AG04450 (cell line): ENCODE measurements at regions of chr3 and their contacts with region 1.

Region 1: DNA sequence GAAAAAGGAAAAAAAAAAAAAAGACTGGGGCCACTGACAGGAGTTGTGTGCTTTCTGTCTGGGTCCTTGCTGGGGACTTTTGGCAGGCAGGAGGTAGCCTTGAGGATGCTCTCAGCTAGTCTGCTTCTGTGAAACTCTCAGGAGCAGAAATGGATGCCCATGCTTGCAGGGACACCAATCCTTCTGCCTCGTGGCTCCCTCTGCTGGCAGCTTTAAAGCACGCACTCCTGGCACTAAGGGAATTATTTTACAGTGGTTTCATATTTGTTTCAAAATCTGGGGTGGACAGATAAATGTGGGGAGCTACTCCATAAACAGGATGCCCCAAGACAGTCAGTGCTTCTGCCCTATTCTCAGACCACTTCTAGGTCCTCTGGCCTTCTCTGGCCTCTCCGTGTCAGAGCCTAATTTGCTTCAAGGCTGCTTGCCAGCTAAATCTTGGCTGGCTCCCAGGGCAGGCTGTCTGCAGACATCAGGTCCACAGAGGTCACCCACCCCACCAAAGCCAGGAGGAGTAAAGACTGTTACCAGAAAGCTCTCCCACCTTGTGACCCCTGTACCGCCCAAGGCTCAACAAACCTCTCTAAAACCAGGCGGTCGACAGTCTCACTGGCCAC is 17.1 kb downstream of the TRAIP start:
- DNase-seq: peak; percentile 50
- H3K4me3 ChIP-seq: no peak overlapping the region
- H3K27ac ChIP-seq: no peak overlapping the region
- H3K27me3 ChIP-seq: no peaks in the 10 kb centered on the region
- CTCF ChIP-seq: peak; percentile 90

Region 2: GRCh38 chr3:49539659-49540560 is 299.4 kb before region 1 on chr3:
- CTCF ChIA-PET with region 1: interaction called, 12 read pairs
- POLR2A ChIA-PET with region 1: no interaction called
- DNase-seq: peak; percentile 88
- H3K4me3 ChIP-seq: peak overlapping the region; percentile 62
- H3K27ac ChIP-seq: peak overlapping the region; percentile 65
- H3K27me3 ChIP-seq: peaks cover 8% of the 10 kb centered on the region
- CTCF ChIP-seq: peak; percentile 80

Region 3: GRCh38 chr3:49769286-49769915 is 69.9 kb before region 1 on chr3:
- CTCF ChIA-PET with region 1: interaction called, 11 read pairs
- POLR2A ChIA-PET with region 1: interaction called, 4 read pairs
- DNase-seq: no peak
- H3K4me3 ChIP-seq: no peak overlapping the region
- H3K27ac ChIP-seq: no peak overlapping the region
- H3K27me3 ChIP-seq: no peaks in the 10 kb centered on the region
- CTCF ChIP-seq: no peak

Region 4: GRCh38 chr3:49813497-49814174 is 25.7 kb before region 1 on chr3 and contains the start of gene UBA7:
- CTCF ChIA-PET with region 1: interaction called, 182 read pairs
- POLR2A ChIA-PET with region 1: interaction called, 3 read pairs
- DNase-seq: no peak
- H3K4me3 ChIP-seq: peak within 1 kb of the TSS; percentile 72
- H3K27ac ChIP-seq: peak within 1 kb of the TSS; percentile 1
- H3K27me3 ChIP-seq: no peaks in the 10 kb centered on the region
- CTCF ChIP-seq: no peak
- polyA plus RNA-seq, gene UBA7: 34.0 and 43.6 TPM in 2 replicates

Region 5: GRCh38 chr3:49855662-49856061 is 16.4 kb after region 1 on chr3:
- CTCF ChIA-PET with region 1: interaction called, 13 read pairs
- POLR2A ChIA-PET with region 1: no interaction called
- DNase-seq: no peak
- H3K4me3 ChIP-seq: peak overlapping the region; percentile 83
- H3K27ac ChIP-seq: peak overlapping the region; percentile 2
- H3K27me3 ChIP-seq: peaks cover 3% of the 10 kb centered on the region
- CTCF ChIP-seq: no peak

Region 6: GRCh38 chr3:49906004-49906743 is 66.9 kb after region 1 on chr3:
- CTCF ChIA-PET with region 1: interaction called, 10 read pairs
- POLR2A ChIA-PET with region 1: no interaction called
- DNase-seq: no peak
- H3K4me3 ChIP-seq: peak overlapping the region; percentile 8
- H3K27ac ChIP-seq: no peak overlapping the region
- H3K27me3 ChIP-seq: no peaks in the 10 kb centered on the region
- CTCF ChIP-seq: peak; percentile 69